Activated T-helper 2 cell treated with anti-CD3 and anti-CD28 coated beads, Interferon-gamma antibody, Interleukin-2, Interleukin-4, amounts not matched to agents 10 μg/mL and 5 μg/mL and 100 μg/mL, durations not matched to agents 14 hours and 24 hours and 36 hours (primary cell): ENCODE measurements at regions of chr4 and their contacts with region 1.

Region 1: DNA sequence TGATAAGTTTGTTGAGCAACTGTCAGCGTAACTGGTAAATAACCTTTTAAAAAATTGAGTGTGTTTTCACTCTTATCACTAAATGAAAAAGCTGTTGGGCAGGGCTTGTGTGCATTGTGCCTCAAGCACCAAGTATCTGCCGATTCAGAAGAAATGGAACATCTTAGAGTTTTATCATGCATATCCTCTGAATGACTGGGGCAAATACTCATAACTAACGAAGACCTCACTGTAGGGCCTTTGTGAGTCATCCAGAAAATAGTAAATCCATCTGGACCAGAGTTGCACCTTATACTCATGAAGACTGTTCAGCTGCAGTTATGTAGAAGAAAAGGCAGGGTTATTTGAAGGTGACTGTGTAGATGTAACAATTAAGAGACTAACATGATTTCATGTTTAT is 222.1 kb downstream of the CAMK2D start:
- DNase-seq: no peak
- H3K4me3 Mint-ChIP-seq: no peak overlapping the region
- H3K27ac Mint-ChIP-seq: peak overlapping the region; percentile 85
- H3K4me1 Mint-ChIP-seq: peaks cover 45% of the 10 kb centered on the region
- H3K27me3 Mint-ChIP-seq: no peaks in the 10 kb centered on the region

Region 2: DNA sequence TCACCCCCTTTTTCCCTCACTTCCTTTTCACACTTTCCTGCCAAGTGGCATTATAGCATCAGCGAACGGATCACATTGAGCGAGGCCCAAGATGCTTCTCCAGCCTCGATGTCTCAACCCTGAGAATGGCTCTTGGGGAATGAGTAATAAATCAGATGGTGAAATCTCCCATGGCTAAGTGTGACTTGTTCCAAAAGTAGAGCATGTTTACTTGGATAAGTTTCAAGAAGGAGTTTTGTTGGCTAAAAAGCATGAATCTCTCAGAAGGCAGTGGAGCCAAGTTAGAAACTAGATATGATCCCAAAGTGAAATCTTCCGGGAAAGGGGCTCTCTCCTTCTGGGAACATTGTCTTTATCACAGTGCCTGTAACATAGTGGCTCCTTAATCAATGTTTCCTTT is 94.1 kb before region 1 on chr4:
- intact Hi-C with region 1: loop called (anchors 2 kb)
- DNase-seq: no peak
- H3K4me3 Mint-ChIP-seq: no peak overlapping the region
- H3K27ac Mint-ChIP-seq: peak overlapping the region; percentile 80
- H3K4me1 Mint-ChIP-seq: peaks cover 25% of the 10 kb centered on the region
- H3K27me3 Mint-ChIP-seq: no peaks in the 10 kb centered on the region

Region 3: GRCh38 chr4:113474017-113474416 is 65.4 kb before region 1 on chr4:
- intact Hi-C with region 1: loop called (anchors 1 kb)
- DNase-seq: no peak
- H3K4me3 Mint-ChIP-seq: no peak overlapping the region
- H3K27ac Mint-ChIP-seq: peak overlapping the region; percentile 7
- H3K4me1 Mint-ChIP-seq: peaks cover 28% of the 10 kb centered on the region
- H3K27me3 Mint-ChIP-seq: no peaks in the 10 kb centered on the region

Region 4: DNA sequence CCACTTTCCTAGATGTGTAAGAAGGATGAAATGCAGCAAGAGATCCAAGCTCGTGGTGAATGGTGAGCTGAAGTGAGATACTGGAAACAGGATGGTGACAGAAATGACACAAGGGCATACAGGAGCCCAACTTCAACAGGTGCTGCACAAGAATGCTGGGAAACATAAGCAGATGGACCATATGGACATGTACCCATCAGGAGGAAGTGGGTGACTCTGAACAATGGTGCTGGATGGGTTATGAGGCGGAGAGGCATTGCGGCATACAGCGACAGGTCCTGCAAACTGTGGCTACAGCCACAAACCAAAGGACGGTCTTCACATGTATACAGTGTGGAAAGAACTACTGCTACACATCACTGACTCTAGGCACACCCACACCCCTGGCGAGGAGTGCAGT is 43.6 kb before region 1 on chr4:
- intact Hi-C with region 1: no loop called
- DNase-seq: no peak
- H3K4me3 Mint-ChIP-seq: no peak overlapping the region
- H3K27ac Mint-ChIP-seq: no peak overlapping the region
- H3K4me1 Mint-ChIP-seq: no peaks in the 10 kb centered on the region
- H3K27me3 Mint-ChIP-seq: no peaks in the 10 kb centered on the region

Region 5: DNA sequence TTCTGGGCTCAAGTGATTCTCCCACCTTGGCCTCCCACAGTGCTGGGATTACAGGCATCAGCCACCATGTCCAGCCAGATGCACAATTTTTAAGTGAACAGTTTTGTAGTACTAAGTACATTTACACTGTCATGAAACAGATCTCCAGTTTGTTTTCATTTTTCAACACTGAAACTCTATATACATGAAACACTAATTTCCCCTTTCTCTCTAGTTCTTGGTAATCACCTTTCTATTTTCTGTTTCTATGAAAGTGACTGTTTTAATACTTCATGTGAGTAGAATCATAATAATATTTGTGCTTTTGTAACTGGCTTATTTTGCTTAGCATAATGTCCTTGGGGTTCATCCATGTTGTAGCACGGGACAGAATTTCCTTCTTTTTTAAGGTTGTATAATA is 15.3 kb before region 1 on chr4:
- intact Hi-C with region 1: loop called (anchors 1 kb)
- DNase-seq: no peak
- H3K4me3 Mint-ChIP-seq: no peak overlapping the region
- H3K27ac Mint-ChIP-seq: peak overlapping the region; percentile 43
- H3K4me1 Mint-ChIP-seq: peaks cover 22% of the 10 kb centered on the region
- H3K27me3 Mint-ChIP-seq: no peaks in the 10 kb centered on the region

Region 6: GRCh38 chr4:113574636-113575103 is 35.3 kb after region 1 on chr4:
- intact Hi-C with region 1: loop called (anchors 5 kb)
- DNase-seq: no peak
- H3K4me3 Mint-ChIP-seq: no peak overlapping the region
- H3K27ac Mint-ChIP-seq: no peak overlapping the region
- H3K4me1 Mint-ChIP-seq: peaks cover 68% of the 10 kb centered on the region
- H3K27me3 Mint-ChIP-seq: no peaks in the 10 kb centered on the region

Region 7: GRCh38 chr4:113625902-113626301 is 86.5 kb after region 1 on chr4:
- intact Hi-C with region 1: loop called (anchors 1 kb)
- DNase-seq: no peak
- H3K4me3 Mint-ChIP-seq: peak overlapping the region; percentile 1
- H3K27ac Mint-ChIP-seq: peak overlapping the region; percentile 52
- H3K4me1 Mint-ChIP-seq: peaks cover 45% of the 10 kb centered on the region
- H3K27me3 Mint-ChIP-seq: no peaks in the 10 kb centered on the region

Region 8: DNA sequence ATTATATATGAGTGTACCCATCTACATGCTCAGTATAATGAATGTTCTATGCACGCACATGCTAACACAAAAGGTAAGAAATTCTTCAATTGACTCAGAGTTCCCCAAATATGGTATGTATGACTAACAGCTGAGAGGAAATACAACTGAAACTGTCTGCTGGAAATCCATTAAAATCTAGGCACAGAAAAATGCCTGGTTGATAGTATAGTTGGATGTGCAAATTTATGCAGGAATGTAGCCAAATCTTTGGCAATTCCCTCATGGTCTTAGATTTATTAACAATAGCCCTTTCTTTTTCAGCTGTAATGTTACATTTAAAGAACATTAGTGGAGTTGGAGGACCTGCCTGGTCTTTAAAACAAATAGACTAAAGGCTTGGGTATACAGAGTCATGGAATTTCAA is 216.6 kb after region 1 on chr4:
- intact Hi-C with region 1: loop called (anchors 1 kb)
- DNase-seq: no peak
- H3K4me3 Mint-ChIP-seq: peak overlapping the region; percentile 10
- H3K27ac Mint-ChIP-seq: peak overlapping the region; percentile 40
- H3K4me1 Mint-ChIP-seq: peaks cover 38% of the 10 kb centered on the region
- H3K27me3 Mint-ChIP-seq: no peaks in the 10 kb centered on the region